CD4-positive, alpha-beta memory T cell (primary cell): ENCODE measurements at regions of chr13 and their contacts with region 1.

Region 1: GRCh38 chr13:20525690-20526544 is at the start of gene CRYL1:
- DNase-seq: peak; percentile 62 to 74 (median 71)
- H3K4me3 ChIP-seq: peak within 1 kb of the TSS; percentile 49 to 83
- H3K4me3 Mint-ChIP-seq: peak within 1 kb of the TSS; percentile 88 to 97 (median 92)
- H3K27ac ChIP-seq: peak within 1 kb of the TSS; percentile 73
- H3K27ac Mint-ChIP-seq: peak within 1 kb of the TSS; percentile 65 to 97 (median 89)
- H3K4me1 ChIP-seq: peaks cover 14% of the 10 kb centered on the region
- H3K4me1 Mint-ChIP-seq: peaks cover 12 to 29% (median 22%) of the 10 kb centered on the region in 4 donors
- H3K27me3 ChIP-seq: no peaks in the 10 kb centered on the region
- H3K27me3 Mint-ChIP-seq: peaks cover 0 to 5% of the 10 kb centered on the region in 2 donors
- total RNA-seq, gene CRYL1: 18.1 to 22.1 TPM

Region 2: DNA sequence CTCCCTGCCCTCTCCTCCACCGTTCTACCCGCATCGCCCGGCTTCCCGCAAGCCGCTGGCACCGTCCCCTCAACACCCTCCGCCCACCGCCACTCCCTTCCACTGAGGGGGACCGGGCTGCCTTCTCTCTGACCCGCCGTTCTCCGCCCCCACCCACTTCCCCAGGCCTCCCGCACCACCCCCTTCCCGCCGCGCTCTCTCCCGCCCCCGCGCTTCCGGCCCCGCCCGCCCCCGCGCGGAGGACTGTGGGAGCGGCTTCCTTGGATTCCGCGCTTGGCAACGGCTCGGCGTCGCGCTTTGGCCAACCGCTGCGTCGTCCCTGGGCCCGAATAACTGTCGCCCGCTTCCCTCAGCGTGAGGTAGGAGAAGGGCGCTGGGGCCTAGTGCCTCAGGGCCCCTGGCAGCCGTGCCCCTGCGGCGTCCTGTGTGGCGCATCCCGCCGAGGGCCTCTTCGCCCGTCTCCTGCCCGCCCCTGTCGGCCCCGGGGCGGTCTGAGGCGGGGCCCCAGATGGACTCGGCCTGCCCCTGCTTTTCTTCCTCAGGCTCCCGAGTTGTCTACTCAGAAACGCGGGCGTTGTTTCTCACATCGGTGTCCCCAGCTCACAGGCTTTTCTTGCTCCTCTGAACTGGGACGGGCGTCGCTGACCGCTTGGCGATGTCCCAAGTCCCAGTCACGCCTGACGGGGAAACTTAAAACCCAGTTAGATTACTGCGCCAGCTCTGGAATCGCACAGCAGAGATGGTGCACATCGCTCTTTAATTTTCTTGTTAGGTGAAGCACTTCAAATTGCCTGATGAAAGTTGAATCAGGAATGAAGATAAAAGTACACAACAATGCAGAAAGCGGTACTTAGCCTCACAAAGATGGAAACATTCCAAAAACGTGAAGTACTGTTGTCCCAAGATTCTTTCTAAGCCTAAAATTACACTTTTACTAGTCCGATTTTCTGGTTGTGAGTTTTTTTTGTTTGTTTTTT is 41.3 kb after region 1 on chr13 and contains the start of gene IFT88:
- CTCF ChIA-PET with region 1: interaction called, 3 read pairs
- POLR2A ChIA-PET with region 1: interaction called, 6 read pairs
- intact Hi-C with region 1: loop called (anchors 1 kb)
- DNase-seq: peak; percentile 78 to 86 (median 80)
- H3K4me3 ChIP-seq: peak within 1 kb of the TSS; percentile 56 to 61
- H3K4me3 Mint-ChIP-seq: peak within 1 kb of the TSS; percentile 92 to 95 (median 94)
- H3K27ac ChIP-seq: peak within 1 kb of the TSS; percentile 53
- H3K27ac Mint-ChIP-seq: peak within 1 kb of the TSS; percentile 92 to 96 (median 92)
- H3K4me1 ChIP-seq: peaks cover 16% of the 10 kb centered on the region
- H3K4me1 Mint-ChIP-seq: peaks cover 10 to 19% (median 14%) of the 10 kb centered on the region in 4 donors
- H3K27me3 ChIP-seq: no peaks in the 10 kb centered on the region
- H3K27me3 Mint-ChIP-seq: no peaks in the 10 kb centered on the region
- total RNA-seq, gene IFT88: 8.3 to 9.8 TPM

Region 3: GRCh38 chr13:20703780-20704445 is 178.0 kb after region 1 on chr13:
- CTCF ChIA-PET with region 1: no interaction called
- POLR2A ChIA-PET with region 1: interaction called, 4 read pairs
- intact Hi-C with region 1: loop called (anchors 1 kb)
- DNase-seq: peak; percentile 78 to 83 (median 81)
- H3K4me3 ChIP-seq: no peak overlapping the region
- H3K4me3 Mint-ChIP-seq: no peak overlapping the region
- H3K27ac ChIP-seq: no peak overlapping the region
- H3K27ac Mint-ChIP-seq: no peak overlapping the region
- H3K4me1 ChIP-seq: peaks cover 7% of the 10 kb centered on the region
- H3K4me1 Mint-ChIP-seq: peaks cover 3 to 14% (median 8%) of the 10 kb centered on the region in 4 donors
- H3K27me3 ChIP-seq: peaks cover 30% of the 10 kb centered on the region
- H3K27me3 Mint-ChIP-seq: peaks cover 11 to 22% of the 10 kb centered on the region in 2 donors

Region 4: DNA sequence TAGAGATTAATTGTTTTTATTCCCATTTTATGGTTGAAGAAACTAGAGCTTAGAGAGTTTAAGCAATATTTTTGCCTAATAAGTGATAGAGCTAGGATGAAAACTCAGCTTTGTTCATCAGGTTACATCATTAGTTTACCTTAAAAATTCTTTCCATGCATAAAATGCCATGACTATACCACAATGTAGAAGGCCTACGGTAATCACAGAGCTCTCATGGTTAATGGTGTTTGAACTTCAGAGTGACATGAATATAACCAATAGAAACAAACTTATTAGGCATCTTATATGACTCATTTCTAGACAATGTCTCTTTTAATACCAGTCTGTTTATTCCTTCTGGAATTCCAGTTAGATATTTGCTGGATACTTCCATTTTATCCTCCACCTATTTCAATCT is 1223.5 kb after region 1 on chr13:
- CTCF ChIA-PET with region 1: no interaction called
- POLR2A ChIA-PET with region 1: no interaction called
- intact Hi-C with region 1: no loop called
- DNase-seq: no peak
- H3K4me3 ChIP-seq: no peak overlapping the region
- H3K4me3 Mint-ChIP-seq: no peak overlapping the region
- H3K27ac ChIP-seq: no peak overlapping the region
- H3K27ac Mint-ChIP-seq: no peak overlapping the region
- H3K4me1 ChIP-seq: no peaks in the 10 kb centered on the region
- H3K4me1 Mint-ChIP-seq: no peaks in the 10 kb centered on the region
- H3K27me3 ChIP-seq: no peaks in the 10 kb centered on the region
- H3K27me3 Mint-ChIP-seq: peaks cover 0 to 3% of the 10 kb centered on the region in 2 donors